Adrenal gland (tissue), 19 donors: ENCODE measurements at regions of chr14 and their contacts with region 1.

Region 1: DNA sequence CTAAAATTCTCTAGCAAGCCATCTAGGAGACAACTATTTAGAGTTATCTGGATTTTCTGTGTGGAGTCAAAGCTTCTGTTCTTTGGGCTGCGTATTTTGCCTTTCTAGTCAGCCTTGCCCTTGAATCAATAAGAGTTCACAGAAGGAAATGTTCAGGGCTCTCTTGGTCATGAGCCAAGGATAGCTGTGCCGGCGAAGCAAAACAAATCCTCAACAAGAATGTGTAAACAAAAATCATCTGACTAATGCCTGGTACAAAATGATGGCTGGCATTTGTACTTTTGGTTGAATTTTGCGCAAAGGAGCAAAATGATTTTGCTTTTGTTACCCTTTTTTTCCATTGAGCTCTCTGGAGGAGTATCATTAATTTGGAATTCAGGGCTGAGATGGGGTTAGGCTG is 171.1 kb downstream of the DACT1 start:
- DNase-seq: peak; percentile 56 to 87 (median 73)
- H3K4me3 ChIP-seq: no peak overlapping the region
- H3K27ac ChIP-seq: peak overlapping the region in 3 of 5 donors; percentile 17 to 58 (median 25)
- H3K4me1 ChIP-seq: peaks cover 5 to 28% of the 10 kb centered on the region in 2 donors
- H3K27me3 ChIP-seq: no peaks in the 10 kb centered on the region
- CTCF ChIP-seq: no peak
- POLR2A ChIP-seq: no peak

Region 2: DNA sequence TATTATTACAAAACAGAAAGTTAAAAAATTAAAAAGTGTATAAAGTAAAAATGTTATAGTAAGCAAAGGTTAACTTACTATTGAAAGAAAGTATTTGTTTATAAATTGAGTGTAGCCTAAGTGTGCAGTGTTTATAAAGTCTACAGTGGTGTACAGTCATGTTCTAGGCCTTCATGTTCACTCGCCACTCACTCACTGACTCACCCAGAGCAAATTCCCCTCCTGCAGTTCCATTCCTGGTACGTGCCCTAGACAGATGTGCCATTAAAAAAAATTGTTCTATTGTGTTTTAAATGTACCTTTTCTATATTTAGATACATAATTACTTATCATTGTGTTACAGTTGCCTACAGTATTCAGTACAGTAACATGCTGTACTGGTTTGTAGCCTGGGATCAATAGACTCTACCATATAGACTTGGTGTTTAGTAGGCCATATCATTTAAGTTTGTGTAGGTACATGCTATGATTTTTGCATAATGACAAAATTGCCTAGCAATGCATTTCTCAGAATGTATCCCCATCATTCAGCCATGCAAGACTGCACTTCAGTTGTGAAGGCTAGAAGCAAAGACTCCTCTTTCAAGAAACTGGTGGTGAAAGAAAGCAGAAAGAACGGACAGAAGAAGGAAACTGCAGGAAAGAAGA is 70.5 kb before region 1 on chr14:
- intact Hi-C with region 1: loop called in 1 of 2 experiments (anchors 5 kb)
- DNase-seq: no peak
- H3K4me3 ChIP-seq: no peak overlapping the region
- H3K27ac ChIP-seq: no peak overlapping the region
- H3K4me1 ChIP-seq: no peaks in the 10 kb centered on the region
- H3K27me3 ChIP-seq: no peaks in the 10 kb centered on the region
- CTCF ChIP-seq: no peak
- POLR2A ChIP-seq: no peak

Region 3: GRCh38 chr14:59787045-59787674 is 978.3 kb after region 1 on chr14:
- intact Hi-C with region 1: no loop called
- DNase-seq: no peak
- H3K4me3 ChIP-seq: no peak overlapping the region
- H3K27ac ChIP-seq: no peak overlapping the region
- H3K4me1 ChIP-seq: no peaks in the 10 kb centered on the region
- H3K27me3 ChIP-seq: no peaks in the 10 kb centered on the region
- CTCF ChIP-seq: no peak
- POLR2A ChIP-seq: no peak